ENCODE measurements at regions of chr19 and their contacts with region 1.

Region 1: GRCh38 chr19:38618590-38619360 is at the start of gene EIF3K:
- DNase-seq: peak; percentile 99
- ATAC-seq: peak; percentile 94 to 99 (median 96)
- H3K4me3 ChIP-seq: peak within 1 kb of the TSS; percentile 69 to 98 (median 82)
- H3K27ac ChIP-seq: peak within 1 kb of the TSS; percentile 66 to 99 (median 92)
- H3K4me1 ChIP-seq: peaks cover 0 to 32% (median 24%) of the 10 kb centered on the region in 9 donors
- H3K27me3 ChIP-seq: no peaks in the 10 kb centered on the region
- CTCF ChIP-seq: no peak
- total RNA-seq, gene EIF3K: 505 to 677 (median 631) TPM

Region 2: DNA sequence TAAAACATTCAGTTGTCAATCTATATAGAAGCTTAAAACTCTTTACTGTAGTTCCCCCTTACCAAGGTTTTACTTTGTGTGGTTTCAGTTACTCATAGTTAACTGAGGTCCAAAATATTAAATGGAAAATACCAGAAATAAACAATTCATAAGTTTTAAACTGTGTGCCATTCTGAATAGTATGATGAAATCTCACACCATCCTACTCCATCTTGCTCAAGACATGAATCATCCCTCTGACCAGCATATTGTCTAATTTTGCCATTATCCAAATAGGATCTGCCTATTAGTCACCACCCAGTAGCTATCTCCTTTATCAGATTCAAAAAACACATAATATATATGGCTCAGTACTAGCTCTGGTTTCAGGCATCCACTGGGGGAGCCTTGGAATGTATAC is 1046.6 kb before region 1 on chr19:
- intact Hi-C with region 1: no loop called
- DNase-seq: no peak
- ATAC-seq: no peak
- H3K4me3 ChIP-seq: no peak overlapping the region
- H3K27ac ChIP-seq: no peak overlapping the region
- H3K4me1 ChIP-seq: no peaks in the 10 kb centered on the region
- H3K27me3 ChIP-seq: no peaks in the 10 kb centered on the region
- CTCF ChIP-seq: no peak

Region 3: GRCh38 chr19:38402967-38403861 is 215.6 kb before region 1 on chr19 and contains the start of gene FAM98C:
- intact Hi-C with region 1: loop called in 2 of 10 experiments (anchors 2 to 5 kb)
- DNase-seq: peak; percentile 93 to 97
- ATAC-seq: peak; percentile 98 to 100 (median 99)
- H3K4me3 ChIP-seq: peak within 1 kb of the TSS; percentile 68 to 99 (median 87)
- H3K27ac ChIP-seq: peak within 1 kb of the TSS in 9 of 10 donors; percentile 68 to 95 (median 82)
- H3K4me1 ChIP-seq: peaks cover 0 to 17% (median 11%) of the 10 kb centered on the region in 9 donors
- H3K27me3 ChIP-seq: peaks cover 8 to 35% (median 27%) of the 10 kb centered on the region in 7 donors
- CTCF ChIP-seq: peak; percentile 95 to 100 (median 100)
- total RNA-seq, gene FAM98C: 9.8 to 16.1 (median 12.2) TPM

Region 4: DNA sequence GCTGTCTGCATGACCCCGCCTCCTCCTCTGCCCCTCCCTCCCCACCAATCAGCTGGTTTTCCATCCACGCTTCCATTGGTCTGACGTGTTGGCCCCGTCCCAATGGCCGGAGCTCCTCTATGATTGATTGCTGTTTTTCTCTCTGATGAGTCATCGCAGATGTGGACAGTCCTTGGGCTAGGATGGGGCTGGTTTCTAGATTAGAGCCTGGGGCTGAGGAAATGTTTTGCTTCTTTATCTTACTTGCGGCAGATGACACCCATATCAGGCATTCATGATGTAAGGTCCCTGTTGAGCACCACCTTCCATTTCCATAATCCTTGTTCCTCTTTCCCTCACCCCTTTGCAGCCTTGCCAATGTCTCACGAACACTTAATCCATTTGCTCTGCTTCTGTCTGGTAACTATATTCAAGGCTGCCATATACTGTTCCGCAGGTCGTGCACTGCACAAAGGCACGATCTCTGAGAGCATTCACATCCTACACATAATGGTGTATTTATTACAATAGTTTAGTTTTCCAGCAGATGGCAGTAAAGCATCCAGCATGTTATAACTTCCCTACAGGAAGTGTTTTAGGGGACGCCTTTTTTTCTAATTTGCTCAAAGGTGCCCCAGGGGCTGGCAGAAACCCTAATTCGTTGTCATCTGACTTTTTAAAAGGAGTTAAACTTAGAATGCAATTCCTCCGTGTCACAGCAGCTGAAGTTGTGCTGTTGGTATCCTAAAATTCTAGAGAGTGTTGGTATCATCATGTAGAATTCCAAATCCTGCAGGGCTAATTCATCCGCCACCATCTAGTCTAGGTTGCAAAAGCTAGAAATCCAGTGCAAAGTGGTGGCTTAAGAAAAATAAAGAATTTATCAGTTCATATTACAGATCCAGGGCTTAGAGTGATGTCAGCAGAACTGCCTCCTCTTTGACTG is 74.5 kb before region 1 on chr19:
- intact Hi-C with region 1: loop called in 1 of 10 experiments (anchors 5 kb)
- DNase-seq: peak; percentile 38 to 50
- ATAC-seq: peak; percentile 70 to 86 (median 80)
- H3K4me3 ChIP-seq: peak overlapping the region in 3 of 10 donors; percentile 6 to 17 (median 12)
- H3K27ac ChIP-seq: no peak overlapping the region
- H3K4me1 ChIP-seq: peaks cover 0 to 11% (median 6%) of the 10 kb centered on the region in 9 donors
- H3K27me3 ChIP-seq: no peaks in the 10 kb centered on the region
- CTCF ChIP-seq: peak; percentile 39 to 75 (median 63)

Region 5: GRCh38 chr19:38899447-38900219 is 280.9 kb after region 1 on chr19 and contains the starts of genes NFKBIB and SIRT2:
- intact Hi-C with region 1: loop called in 1 of 10 experiments (anchors 10 kb)
- DNase-seq: peak; percentile 98 to 100
- ATAC-seq: peak; percentile 97 to 99 (median 98)
- H3K4me3 ChIP-seq: peak within 1 kb of the TSS; percentile 64 to 90 (median 80)
- H3K27ac ChIP-seq: peak within 1 kb of the TSS; percentile 61 to 93 (median 90)
- H3K4me1 ChIP-seq: peaks cover 4 to 41% (median 34%) of the 10 kb centered on the region in 9 donors
- H3K27me3 ChIP-seq: no peaks in the 10 kb centered on the region
- CTCF ChIP-seq: peak in 1 of 9 donors; percentile 23
- total RNA-seq, gene NFKBIB: 16.1 to 26.6 (median 21.6) TPM
- total RNA-seq, gene SIRT2: 51.7 to 103 (median 72.6) TPM